Posterior vena cava (tissue), 2 donors: ENCODE measurements at regions of chr19 and their contacts with region 1.

Region 1: DNA sequence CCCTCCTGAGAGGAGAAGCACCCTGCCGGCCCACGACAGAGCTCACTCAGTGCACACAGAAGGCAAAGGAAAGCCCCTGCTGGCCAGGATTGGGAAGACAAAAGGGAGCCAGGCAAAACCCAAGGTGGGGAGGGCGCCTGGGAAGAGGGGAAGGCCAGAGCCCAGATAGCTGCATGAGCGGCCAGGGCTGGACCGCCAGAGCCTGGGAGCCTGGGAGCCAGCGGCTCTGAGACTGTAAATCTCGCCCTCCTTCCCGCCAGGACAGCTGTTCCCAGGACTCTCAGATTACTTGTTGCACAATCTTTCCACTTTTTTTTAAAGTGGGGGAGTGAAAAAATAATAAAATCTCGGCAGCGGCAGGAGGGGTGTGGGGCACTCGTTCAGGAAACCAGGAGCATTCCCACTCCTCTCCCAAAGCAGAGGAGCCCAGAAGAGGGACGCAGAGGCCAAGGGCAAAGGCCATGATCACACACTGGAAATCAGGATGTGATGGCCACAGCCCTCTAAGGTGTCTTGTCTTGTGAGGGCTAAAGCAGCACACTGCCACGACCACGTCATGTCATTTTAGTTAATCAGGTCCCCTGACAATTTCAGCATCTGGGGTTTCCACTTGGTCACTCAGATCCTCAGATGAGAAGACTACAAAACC is 19.6 kb upstream of the EPHX3 start:
- DNase-seq: peak; percentile 96

Region 2: DNA sequence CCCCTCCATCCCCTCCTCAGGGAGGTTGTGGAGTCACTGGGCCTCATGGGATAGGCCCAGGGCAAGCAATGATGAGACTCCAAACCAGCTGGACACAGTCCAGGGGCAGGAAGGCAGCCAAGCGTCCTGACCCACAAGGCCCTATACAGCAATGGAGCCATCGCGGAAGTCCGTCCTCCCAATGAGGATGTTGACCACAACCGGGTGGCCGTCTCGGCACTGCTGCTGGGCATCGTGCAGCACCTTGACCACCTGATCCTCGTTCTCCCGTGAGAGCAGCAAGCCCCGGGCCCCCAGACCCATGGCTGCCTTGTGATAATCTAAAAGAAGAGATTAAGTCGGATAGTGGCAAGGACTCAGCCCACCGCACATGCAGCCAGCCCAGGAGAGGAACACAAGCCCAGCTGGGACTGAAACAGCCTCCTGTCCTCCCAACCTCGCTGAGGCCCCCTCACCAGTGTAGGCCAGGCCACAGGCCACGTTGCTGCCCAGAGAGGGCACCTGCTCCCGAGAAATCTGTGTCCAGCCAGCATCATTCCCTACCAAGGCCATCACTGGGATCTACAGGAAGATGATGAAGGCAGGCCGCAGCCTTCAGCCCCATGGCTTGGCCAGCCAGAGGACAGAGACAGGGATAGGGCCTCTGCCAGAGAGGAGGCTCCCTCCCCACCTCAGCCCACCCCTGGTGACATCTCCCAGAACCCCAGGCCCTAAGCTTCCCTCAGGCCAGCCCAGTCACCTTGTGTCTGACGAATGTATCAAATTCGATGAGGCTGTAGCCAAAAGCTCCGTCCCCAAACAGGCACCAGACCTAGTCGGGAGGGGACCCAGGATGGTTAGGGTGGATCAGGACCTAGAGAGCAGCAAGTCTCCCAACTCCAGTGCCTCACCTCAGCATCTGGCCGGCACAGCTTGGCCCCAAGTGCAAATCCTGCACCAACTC is 136.5 kb before region 1 on chr19:
- intact Hi-C with region 1: loop called in 1 of 2 experiments (anchors 10 kb)
- DNase-seq: peak; percentile 92

Region 3: DNA sequence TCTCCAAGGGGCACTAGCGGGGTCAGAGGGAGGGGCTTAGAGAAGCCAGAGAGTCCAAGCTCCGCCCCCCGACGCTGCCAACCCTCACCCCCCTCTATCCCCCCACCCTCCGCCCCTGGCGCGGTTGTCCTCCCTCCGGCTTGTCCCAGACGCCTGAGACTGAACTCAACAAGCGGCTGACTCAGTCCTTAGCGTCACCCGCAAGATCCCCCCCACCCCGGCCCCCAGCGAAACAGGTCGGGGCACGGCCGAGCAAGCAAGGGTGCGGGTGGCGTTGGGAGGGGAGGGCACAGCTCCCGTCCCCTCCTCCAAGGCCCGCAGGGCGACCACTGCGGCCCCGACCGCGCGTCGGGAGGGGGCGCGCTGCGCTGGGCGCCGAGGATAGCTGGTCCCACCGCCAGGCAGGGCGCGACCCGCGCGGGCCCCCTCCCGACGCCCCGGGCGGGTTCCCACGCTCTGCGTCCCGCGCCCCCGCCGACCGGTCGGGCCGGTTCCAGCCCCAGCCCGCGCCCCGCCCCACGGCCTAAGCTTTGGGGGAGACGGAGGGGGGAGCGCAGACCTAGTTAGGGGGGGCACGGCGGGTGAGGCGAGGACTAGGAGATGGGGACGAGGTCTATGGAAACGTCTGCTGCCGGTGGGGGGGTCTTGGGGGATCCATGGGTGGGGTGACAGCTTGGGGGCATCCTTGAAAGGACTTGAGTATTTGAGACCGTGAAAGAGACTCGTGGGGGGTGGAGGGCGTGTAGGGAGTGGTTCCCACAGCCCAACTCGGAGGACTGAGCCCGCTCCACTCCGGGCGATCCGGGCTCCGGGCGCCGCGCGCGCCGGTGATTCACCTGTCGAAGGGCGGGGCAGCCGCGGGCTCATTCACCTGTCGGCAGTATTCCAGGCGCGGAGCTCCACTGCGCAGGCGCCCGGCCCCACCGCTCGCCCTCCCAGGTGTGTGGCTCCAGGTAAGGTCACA is 56.2 kb before region 1 on chr19:
- intact Hi-C with region 1: loop called in 1 of 2 experiments (anchors 5 kb)
- DNase-seq: peak; percentile 91

Region 4: GRCh38 chr19:15612338-15612737 is 360.5 kb after region 1 on chr19:
- intact Hi-C with region 1: no loop called
- DNase-seq: no peak